ENCODE measurements at regions of chr20 and their contacts with region 1.

Region 1: DNA sequence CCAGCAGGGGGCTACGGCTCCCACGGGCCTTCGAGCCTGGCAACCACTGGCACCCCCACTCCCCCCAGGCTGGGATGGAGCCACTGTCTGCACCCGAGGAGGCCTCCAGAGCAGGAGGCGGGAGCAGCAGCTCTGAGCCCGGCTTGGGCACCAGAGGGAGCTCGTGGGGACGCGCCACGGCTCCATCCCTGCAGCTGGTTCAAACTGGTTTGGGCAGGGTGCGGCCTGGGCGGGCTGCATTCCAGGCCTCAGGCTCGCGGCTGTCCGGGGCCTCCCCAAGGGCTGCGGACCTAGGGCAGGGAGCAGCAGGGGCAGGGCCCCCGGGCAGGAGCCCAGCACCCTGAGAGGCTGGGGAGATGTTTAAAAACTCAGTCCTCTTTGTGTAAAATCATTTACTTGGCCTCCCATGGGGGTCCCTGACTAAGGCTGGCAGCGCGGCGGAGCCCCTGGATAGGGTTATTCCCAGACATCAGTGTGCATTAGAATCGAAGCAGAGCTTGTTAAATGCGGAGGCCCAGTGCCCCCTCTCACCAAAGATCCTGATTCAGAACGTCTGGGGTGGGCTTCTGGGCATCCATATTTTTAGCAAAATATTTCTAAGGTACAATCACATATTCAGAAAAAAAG is 4.1 kb upstream of the BCAS4 start:
- DNase-seq: peak; percentile 96
- ATAC-seq: peak; percentile 94
- H3K4me3 ChIP-seq: peak overlapping the region; percentile 27
- H3K27ac ChIP-seq: peak overlapping the region; percentile 92
- H3K4me1 ChIP-seq: peaks cover 22% of the 10 kb centered on the region
- H3K27me3 ChIP-seq: no peaks in the 10 kb centered on the region
- CTCF ChIP-seq: peak; percentile 74

Region 2: DNA sequence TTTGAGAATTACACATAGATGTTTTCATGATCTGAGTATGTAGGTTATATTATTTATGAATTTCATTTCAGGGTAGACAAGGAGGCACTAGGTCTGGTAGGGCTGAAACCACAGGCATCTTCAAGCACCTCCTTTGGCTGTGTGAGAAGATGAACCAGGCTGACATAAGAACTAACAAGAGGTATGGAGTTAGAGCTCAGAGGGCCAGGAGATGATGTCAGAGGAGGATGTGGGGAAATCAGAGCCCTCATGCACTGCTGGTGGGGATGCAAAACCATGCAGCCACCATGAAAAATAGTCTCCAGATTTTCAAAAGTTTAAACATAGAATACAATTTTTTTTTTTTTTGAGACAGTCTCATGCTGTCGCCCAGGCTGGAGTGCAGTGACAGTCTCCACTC is 85.8 kb before region 1 on chr20:
- intact Hi-C with region 1: no loop called
- DNase-seq: no peak
- ATAC-seq: peak; percentile 49
- H3K4me3 ChIP-seq: no peak overlapping the region
- H3K27ac ChIP-seq: no peak overlapping the region
- H3K4me1 ChIP-seq: no peaks in the 10 kb centered on the region
- H3K27me3 ChIP-seq: no peaks in the 10 kb centered on the region
- CTCF ChIP-seq: no peak

Region 3: DNA sequence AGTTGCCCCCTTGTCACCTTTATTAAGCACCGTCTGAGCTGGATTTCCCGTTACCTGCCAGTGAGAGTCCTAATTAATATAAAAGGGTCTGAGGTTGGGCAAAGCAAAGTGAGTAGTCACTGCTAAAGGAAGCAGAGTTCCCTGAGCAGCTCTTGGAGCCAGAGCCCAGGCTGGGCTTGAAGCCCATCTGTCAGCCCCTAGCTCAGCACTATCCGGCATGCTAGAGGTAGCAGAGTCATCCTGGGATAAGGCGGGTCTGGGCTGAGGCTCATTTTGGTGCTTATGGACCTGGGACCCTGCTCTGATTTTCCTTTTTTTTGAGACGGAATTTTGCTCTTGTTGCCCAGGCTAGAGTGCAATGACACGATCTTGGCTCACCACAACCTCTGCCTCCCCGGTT is 94.3 kb after region 1 on chr20:
- intact Hi-C with region 1: no loop called
- DNase-seq: no peak
- ATAC-seq: no peak
- H3K4me3 ChIP-seq: no peak overlapping the region
- H3K27ac ChIP-seq: no peak overlapping the region
- H3K4me1 ChIP-seq: no peaks in the 10 kb centered on the region
- H3K27me3 ChIP-seq: no peaks in the 10 kb centered on the region
- CTCF ChIP-seq: no peak

Region 4: GRCh38 chr20:50929299-50930138 is 138.8 kb after region 1 on chr20:
- intact Hi-C with region 1: loop called (anchors 10 kb)
- DNase-seq: peak; percentile 91
- ATAC-seq: peak; percentile 87
- H3K4me3 ChIP-seq: peak overlapping the region; percentile 72
- H3K27ac ChIP-seq: peak overlapping the region; percentile 79
- H3K4me1 ChIP-seq: peaks cover 36% of the 10 kb centered on the region
- H3K27me3 ChIP-seq: no peaks in the 10 kb centered on the region
- CTCF ChIP-seq: peak; percentile 78

Region 5: DNA sequence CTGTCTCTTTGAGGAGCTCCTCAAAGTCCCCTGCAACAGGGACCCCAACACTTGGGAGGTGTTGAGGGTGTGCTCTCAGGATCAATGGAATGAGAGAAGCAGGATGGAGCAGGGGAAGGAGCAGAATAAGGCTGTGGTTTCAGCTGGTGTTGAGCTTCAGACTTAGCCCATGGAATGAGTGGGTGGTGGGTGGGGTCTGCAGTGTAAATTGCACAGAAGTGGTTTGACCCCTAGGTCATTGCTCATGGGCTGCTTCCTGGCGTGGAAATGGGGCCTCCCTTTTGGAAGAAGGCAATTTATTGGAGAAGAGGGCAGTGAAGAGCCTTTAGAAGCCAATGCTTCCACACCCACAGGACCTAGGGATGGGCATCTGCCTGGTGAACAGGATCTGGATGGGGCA is 269.1 kb after region 1 on chr20:
- intact Hi-C with region 1: no loop called
- DNase-seq: no peak
- ATAC-seq: peak; percentile 37
- H3K4me3 ChIP-seq: no peak overlapping the region
- H3K27ac ChIP-seq: no peak overlapping the region
- H3K4me1 ChIP-seq: no peaks in the 10 kb centered on the region
- H3K27me3 ChIP-seq: peaks cover 19% of the 10 kb centered on the region
- CTCF ChIP-seq: no peak

Region 6: GRCh38 chr20:51326201-51326819 is 535.5 kb after region 1 on chr20:
- intact Hi-C with region 1: loop called (anchors 10 kb)
- DNase-seq: no peak
- ATAC-seq: peak; percentile 82
- H3K4me3 ChIP-seq: no peak overlapping the region
- H3K27ac ChIP-seq: no peak overlapping the region
- H3K4me1 ChIP-seq: no peaks in the 10 kb centered on the region
- H3K27me3 ChIP-seq: no peaks in the 10 kb centered on the region
- CTCF ChIP-seq: peak; percentile 79